H1 (cell line): ENCODE measurements at regions of chr13 and their contacts with region 1.

Region 1: DNA sequence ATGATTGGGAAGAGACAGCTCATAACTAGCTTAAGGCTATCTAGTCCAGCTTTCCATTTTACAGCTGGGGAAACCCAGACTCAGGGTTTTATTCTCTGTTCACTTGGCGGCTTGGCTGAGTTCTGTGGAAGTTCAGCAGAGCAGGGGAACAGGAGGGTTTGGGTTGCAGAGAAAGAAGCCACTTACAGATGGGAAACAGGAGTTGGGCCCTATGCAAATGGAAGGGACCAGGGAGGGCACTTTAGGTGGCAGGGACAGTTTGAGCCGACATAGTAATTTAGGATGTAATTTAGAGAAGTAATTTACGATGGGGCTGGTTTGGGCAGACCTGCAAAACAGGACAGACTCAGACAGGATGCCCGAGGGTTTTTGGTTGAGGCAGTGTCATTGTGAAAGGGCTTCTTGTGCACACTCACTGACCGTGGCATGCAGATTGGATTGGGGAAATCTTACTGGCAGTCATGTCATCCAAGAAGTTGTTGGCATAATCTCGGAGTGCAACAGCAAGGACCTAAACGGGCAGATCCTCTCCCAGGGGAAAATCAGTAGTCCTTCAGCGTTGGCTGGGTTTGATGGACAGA is 47.3 kb upstream of the GPR183 start:
- DNase-seq: peak in 1 of 2 experiments; percentile 28
- H3K4me3 ChIP-seq: no peak overlapping the region
- H3K27ac ChIP-seq: no peak overlapping the region
- H3K4me1 ChIP-seq: peaks cover 0 to 2% (median 0%) of the 10 kb centered on the region in 4 experiments; a peak in 2 of 7 replicates
- H3K27me3 ChIP-seq: no peaks in the 10 kb centered on the region
- CTCF ChIP-seq: no peak
- EP300 ChIP-seq: no peak
- POLR2A ChIP-seq: no peak
- RAD21 ChIP-seq: no peak

Region 2: DNA sequence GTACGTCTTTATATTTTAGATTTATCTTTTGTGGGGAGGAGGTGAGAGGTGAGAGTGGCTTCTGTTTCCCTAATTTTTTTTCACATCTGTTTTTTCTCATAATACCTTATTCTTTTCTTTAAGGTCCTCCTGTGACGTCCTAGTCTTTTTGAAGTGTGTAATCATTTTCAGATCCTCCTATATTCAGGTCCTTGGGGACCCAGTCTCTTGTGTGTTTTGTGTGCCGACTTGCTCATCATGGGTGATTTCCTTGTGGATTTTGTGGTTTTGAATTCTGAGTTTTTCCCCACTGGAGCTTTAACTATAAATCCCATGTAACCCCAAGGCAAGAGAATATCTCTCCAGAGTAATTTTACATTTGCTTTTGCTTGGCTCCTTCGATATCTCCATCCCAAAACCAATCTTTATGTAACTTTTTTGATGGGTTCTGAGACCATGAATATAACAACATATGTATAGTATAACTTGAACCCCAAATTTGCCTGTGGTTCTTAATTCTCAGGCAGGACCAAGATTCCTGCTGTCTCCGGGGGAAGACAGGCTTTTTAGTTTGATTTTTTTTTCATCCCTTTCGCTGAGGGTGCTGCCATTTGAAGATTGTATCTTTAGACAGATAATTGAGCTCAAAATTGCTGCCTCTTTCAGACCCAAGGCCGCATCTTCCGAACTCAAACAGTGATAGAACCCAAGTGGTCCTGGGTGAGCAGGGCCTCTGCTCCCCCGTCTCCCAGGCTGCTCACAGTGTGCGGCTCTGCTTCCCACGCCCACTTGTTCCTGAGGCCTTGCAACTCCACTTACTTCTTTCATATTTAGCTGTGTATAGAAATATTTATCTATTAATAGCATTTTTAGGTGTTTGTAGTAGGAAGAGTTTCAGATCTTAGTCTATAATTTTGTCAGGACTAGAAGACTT is 11.9 kb after region 1 on chr13:
- CTCF ChIA-PET with region 1: interaction called, 20 read pairs
- POLR2A ChIA-PET with region 1: no interaction called
- DNase-seq: peak in 1 of 2 experiments; percentile 23
- H3K4me3 ChIP-seq: no peak overlapping the region
- H3K27ac ChIP-seq: no peak overlapping the region
- H3K4me1 ChIP-seq: peaks cover 0 to 4% (median 2%) of the 10 kb centered on the region in 4 experiments; a peak in 2 of 7 replicates
- H3K27me3 ChIP-seq: no peaks in the 10 kb centered on the region
- CTCF ChIP-seq: no peak
- EP300 ChIP-seq: no peak
- POLR2A ChIP-seq: no peak
- RAD21 ChIP-seq: no peak